ENCODE measurements at regions of chr5 and their contacts with region 1.

Region 1: GRCh38 chr5:168679515-168679920 is 100.3 kb upstream of the PANK3 start:
- DNase-seq: peak; percentile 22
- H3K4me3 Mint-ChIP-seq: no peak overlapping the region
- H3K27ac Mint-ChIP-seq: no peak overlapping the region
- H3K4me1 Mint-ChIP-seq: peaks cover 7% of the 10 kb centered on the region
- H3K27me3 Mint-ChIP-seq: no peaks in the 10 kb centered on the region

Region 2: DNA sequence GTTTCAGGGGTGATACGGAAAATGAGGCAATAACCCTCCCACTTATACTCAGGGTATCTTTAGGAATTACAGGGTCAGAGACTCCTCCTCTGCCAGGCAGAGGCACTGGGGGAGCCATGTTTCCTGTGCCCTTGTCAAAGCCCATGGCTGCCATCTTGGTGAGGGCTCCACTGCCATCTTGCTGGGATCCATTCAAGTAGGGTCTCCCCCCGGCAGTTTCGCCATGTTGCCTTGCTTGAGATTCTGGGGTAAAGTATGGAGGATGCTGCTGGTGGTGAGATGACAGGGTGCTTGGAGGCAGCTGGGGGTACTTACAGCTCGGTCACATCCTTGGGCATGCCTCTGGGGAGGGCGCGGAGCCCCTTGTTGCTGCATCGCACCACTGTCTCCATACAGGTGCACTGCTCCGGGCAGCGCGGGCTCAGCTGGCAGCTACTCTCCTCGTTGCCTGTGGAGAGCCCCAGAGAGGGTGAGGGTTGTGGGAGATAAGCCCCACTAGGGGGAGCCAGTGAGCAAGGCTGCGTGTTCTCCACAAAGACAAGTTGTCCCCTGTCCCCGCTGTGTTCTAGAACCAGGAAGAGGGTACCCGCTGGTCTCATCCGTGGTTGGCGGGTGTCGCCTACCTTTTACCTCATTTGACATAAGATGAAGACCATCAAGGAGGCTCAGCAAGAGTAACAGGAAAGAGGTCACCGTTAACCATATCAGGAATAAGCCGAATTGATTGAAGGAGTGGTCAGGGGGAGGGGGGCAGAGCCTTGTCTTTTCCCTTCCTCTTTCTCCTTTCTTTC is 68.7 kb after region 1 on chr5:
- intact Hi-C with region 1: no loop called
- DNase-seq: peak; percentile 17
- H3K4me3 Mint-ChIP-seq: no peak overlapping the region
- H3K27ac Mint-ChIP-seq: no peak overlapping the region
- H3K4me1 Mint-ChIP-seq: no peaks in the 10 kb centered on the region
- H3K27me3 Mint-ChIP-seq: peaks cover 4% of the 10 kb centered on the region

Region 3: GRCh38 chr5:168941901-168942300 is 262.4 kb after region 1 on chr5:
- intact Hi-C with region 1: loop called (anchors 5 kb)
- DNase-seq: no peak
- H3K4me3 Mint-ChIP-seq: no peak overlapping the region
- H3K27ac Mint-ChIP-seq: no peak overlapping the region
- H3K4me1 Mint-ChIP-seq: no peaks in the 10 kb centered on the region
- H3K27me3 Mint-ChIP-seq: peaks cover 2% of the 10 kb centered on the region

Measured in activated T-helper 1 cell treated with anti-CD3 and anti-CD28 coated beads, Interleukin-12 subunit alpha, Interleukin-12 subunit beta, Interleukin-2, Interleukin-4 antibody, amounts not matched to agents 30 ng/mL and 10 ng/mL and 1 ng/mL, durations not matched to agents 14 hours and 24 hours and 36 hours (primary cell).